H1 (cell line): ENCODE measurements at regions of chr16 and their contacts with region 1.

Region 1: DNA sequence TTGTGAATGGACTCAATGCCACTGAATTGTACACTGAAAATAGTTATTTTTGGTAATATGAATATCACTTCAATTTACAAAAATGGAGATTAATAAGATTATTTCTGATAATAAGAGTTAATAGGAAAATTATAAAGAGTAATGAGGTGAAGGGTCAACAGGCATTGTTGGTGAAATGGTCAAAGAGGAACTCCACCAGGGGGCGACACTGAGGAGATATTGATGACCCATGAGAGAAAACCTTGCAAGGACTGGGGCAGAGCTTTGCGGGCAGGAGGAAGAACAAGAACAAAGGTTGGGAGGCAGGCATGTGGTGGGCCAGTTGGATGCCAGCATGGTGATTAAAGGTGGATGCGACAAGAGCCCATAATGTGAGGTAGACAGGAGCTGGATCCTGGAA is 74.0 kb upstream of the XYLT1 start:
- DNase-seq: peak; percentile 17 to 86
- H3K4me3 ChIP-seq: no peak overlapping the region
- H3K27ac ChIP-seq: no peak overlapping the region
- H3K4me1 ChIP-seq: no peaks in the 10 kb centered on the region
- H3K27me3 ChIP-seq: no peaks in the 10 kb centered on the region
- CTCF ChIP-seq: peak; percentile 20 to 64 (median 60)
- EP300 ChIP-seq: no peak
- POLR2A ChIP-seq: no peak
- RAD21 ChIP-seq: peak; percentile 50 to 69

Region 2: DNA sequence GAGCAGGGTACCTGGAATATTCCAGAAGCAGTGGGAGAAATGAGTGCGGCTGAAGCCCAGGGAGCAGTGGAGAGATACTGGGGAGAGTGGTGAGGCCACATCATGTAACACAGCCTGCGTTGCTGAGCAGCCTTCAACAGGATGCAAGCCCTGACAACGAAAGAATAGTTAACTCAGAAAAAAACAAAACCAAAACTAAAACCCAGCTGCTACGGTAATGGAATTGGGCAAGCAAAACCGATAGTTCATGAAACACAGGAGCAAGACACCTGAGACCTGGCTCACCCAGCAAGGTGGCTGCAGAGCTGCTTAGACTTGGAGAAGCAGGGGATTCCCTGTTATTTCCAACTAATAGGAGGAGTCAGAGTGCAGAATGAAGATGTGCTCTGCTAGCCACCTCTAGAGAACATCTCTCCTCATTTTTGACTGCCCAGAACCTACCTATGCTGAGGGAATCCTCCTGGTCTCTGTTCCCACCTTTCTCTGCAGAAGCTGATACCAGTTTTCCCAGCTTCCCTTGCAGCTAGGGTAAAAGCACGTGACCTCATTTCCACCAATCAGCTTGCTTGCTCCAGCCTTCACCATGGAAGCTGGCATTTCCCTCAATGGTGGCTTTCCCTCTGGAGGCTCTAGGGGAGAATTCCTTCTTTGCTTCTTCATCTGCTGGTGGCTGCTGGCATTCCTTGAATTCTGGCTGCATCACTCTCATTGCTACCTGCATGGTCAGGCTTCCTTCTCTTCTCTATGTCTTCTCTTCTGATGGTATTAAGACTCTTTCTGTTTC is 14.6 kb before region 1 on chr16:
- CTCF ChIA-PET with region 1: interaction called, 15 read pairs
- POLR2A ChIA-PET with region 1: no interaction called
- DNase-seq: no peak
- H3K4me3 ChIP-seq: no peak overlapping the region
- H3K27ac ChIP-seq: no peak overlapping the region
- H3K4me1 ChIP-seq: no peaks in the 10 kb centered on the region
- H3K27me3 ChIP-seq: no peaks in the 10 kb centered on the region; a peak in 1 of 7 replicates
- CTCF ChIP-seq: no peak
- EP300 ChIP-seq: no peak
- POLR2A ChIP-seq: no peak
- RAD21 ChIP-seq: no peak

Region 3: GRCh38 chr16:17571499-17572093 is 26.8 kb after region 1 on chr16:
- CTCF ChIA-PET with region 1: no interaction called
- POLR2A ChIA-PET with region 1: no interaction called
- DNase-seq: no peak
- H3K4me3 ChIP-seq: no peak overlapping the region
- H3K27ac ChIP-seq: no peak overlapping the region
- H3K4me1 ChIP-seq: no peaks in the 10 kb centered on the region
- H3K27me3 ChIP-seq: no peaks in the 10 kb centered on the region
- CTCF ChIP-seq: no peak
- EP300 ChIP-seq: no peak
- POLR2A ChIP-seq: no peak
- RAD21 ChIP-seq: no peak

Region 4: DNA sequence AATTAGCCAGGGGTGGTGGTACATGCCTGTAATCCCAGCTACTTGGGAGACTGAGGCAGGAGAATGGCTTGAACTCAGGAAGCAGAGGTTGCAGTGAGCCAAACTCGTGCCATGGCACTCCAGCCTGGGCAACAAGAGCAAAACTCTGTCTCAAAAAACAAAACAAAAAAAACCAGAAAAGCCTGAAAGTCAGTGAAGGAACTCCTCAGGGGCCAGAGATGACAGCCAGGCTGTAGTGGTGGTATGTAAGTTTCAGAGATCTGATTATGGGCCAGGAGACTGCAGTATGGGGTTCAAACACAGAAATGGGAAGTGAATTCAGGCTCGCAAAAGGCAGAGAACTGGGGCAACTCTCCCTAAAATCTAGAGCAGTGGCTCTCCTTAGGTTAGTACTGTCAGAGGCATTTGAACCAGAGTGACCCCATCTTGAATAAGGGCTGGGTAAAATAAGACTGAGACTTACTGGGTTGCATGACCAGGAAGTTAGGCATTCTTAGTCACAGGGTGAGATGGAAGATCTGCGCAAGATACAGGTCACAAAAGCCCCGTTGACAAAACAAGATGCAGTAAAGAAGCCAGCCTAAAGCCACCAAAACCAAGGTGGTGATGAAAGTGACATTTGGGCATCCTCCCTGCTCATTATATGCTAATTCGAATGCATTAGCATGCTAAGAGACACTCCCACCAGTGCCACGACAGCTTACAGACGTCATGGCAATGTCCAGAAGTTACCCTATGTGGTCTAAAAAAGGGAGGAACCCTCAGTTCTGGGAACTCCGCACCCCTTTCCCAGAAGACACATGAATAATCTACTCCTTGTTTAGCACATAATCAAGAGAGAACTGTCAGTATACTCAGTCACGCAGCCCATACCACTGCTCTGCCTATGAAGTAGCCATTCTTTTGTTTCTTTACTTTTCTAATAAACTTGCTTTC is 46.2 kb after region 1 on chr16:
- CTCF ChIA-PET with region 1: no interaction called
- POLR2A ChIA-PET with region 1: no interaction called
- DNase-seq: no peak
- H3K4me3 ChIP-seq: no peak overlapping the region
- H3K27ac ChIP-seq: no peak overlapping the region
- H3K4me1 ChIP-seq: no peaks in the 10 kb centered on the region
- H3K27me3 ChIP-seq: no peaks in the 10 kb centered on the region
- CTCF ChIP-seq: no peak
- EP300 ChIP-seq: no peak
- POLR2A ChIP-seq: no peak
- RAD21 ChIP-seq: no peak

Region 5: GRCh38 chr16:17930280-17930679 is 385.5 kb after region 1 on chr16:
- CTCF ChIA-PET with region 1: no interaction called
- POLR2A ChIA-PET with region 1: no interaction called
- DNase-seq: no peak
- H3K4me3 ChIP-seq: no peak overlapping the region
- H3K27ac ChIP-seq: no peak overlapping the region
- H3K4me1 ChIP-seq: peaks cover 0 to 6% (median under 1%) of the 10 kb centered on the region in 4 experiments; a peak in 4 of 7 replicates
- H3K27me3 ChIP-seq: no peaks in the 10 kb centered on the region
- CTCF ChIP-seq: peak in 2 of 3 experiments; percentile 8 to 17; a peak in 2 of 4 replicates
- EP300 ChIP-seq: no peak
- POLR2A ChIP-seq: no peak
- RAD21 ChIP-seq: no peak; a peak in 1 of 4 replicates